ENCODE measurements at regions of chr12 and their contacts with region 1.

Region 1: DNA sequence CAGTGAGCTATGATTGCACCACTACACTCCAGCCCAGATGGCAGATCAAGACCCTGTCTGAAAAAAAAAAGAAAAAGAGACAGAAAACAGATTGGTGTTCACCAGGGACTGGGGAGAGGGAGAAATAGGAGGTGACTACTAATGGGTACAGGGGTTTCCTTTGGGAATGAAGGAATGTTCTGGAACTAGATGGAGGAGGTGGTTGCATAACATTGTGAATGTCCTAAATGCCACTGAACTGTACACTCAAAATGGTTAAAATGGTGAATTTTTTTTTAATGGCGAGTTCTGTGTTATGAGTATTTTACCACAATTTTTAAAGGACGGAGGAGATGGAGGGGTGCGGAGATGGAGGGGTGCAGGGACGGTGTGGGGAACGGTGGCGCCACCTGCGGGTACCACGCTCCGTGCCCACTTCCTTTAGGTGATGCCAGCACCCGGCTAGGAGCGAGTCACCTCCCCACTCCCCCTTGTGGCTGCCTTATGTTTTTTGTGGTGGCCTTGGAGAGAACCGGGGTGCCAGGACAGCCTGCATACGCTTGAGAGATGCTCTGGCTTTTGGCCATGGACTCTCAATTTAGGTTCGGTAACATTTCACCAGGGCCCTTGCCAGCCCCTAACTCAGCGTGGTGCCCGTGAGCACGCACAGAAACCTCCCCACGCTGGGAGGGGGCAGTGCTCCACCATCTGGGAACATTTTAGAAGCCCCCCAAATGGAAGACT is 16.1 kb downstream of the UBC start:
- DNase-seq: peak in 1 of 2 donors; percentile 61
- ATAC-seq: peak; percentile 73
- H3K4me3 ChIP-seq: no peak overlapping the region
- H3K27ac ChIP-seq: no peak overlapping the region
- H3K4me1 ChIP-seq: no peaks in the 10 kb centered on the region
- H3K27me3 ChIP-seq: no peaks in the 10 kb centered on the region

Region 2: GRCh38 chr12:124804011-124804621 is 94.2 kb before region 1 on chr12:
- intact Hi-C with region 1: loop called in 1 of 2 experiments (anchors 10 kb)
- DNase-seq: peak in 1 of 2 donors; percentile 55
- ATAC-seq: peak; percentile 48
- H3K4me3 ChIP-seq: no peak overlapping the region
- H3K27ac ChIP-seq: no peak overlapping the region
- H3K4me1 ChIP-seq: no peaks in the 10 kb centered on the region
- H3K27me3 ChIP-seq: no peaks in the 10 kb centered on the region

Measured in aorta (tissue), 5 donors.